AG04450 (cell line): ENCODE measurements at regions of chr12 and their contacts with region 1.

Region 1: DNA sequence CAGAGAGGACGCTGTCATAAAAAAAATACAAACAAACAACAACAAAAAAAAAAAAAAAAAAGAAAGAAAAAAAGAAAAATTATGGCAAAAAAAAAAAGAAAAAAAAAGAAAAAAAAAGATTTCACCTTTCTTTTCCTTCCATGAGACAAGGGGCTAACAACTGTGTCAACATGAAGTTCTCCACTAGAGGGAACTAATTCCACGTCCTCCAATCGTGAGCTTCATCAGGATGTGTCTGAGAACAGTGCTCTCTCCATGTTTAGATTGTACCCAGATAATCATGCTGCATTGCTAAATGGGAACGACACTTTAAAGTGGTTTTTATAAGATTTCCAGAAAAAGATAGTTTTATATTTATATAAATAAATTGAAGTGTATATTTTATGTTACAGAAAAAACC is 96.2 kb upstream of the PTPRB start:
- DNase-seq: no peak
- H3K4me3 ChIP-seq: no peak overlapping the region
- H3K27ac ChIP-seq: no peak overlapping the region
- H3K27me3 ChIP-seq: no peaks in the 10 kb centered on the region
- CTCF ChIP-seq: peak; percentile 79

Region 2: GRCh38 chr12:70590051-70590450 is 143.3 kb before region 1 on chr12:
- CTCF ChIA-PET with region 1: interaction called, 10 read pairs
- POLR2A ChIA-PET with region 1: no interaction called
- DNase-seq: peak; percentile 41
- H3K4me3 ChIP-seq: no peak overlapping the region
- H3K27ac ChIP-seq: no peak overlapping the region
- H3K27me3 ChIP-seq: no peaks in the 10 kb centered on the region
- CTCF ChIP-seq: peak; percentile 90

Region 3: GRCh38 chr12:70671698-70672097 is 61.7 kb before region 1 on chr12:
- CTCF ChIA-PET with region 1: interaction called, 12 read pairs
- POLR2A ChIA-PET with region 1: no interaction called
- DNase-seq: no peak
- H3K4me3 ChIP-seq: no peak overlapping the region
- H3K27ac ChIP-seq: no peak overlapping the region
- H3K27me3 ChIP-seq: no peaks in the 10 kb centered on the region
- CTCF ChIP-seq: no peak

Region 4: GRCh38 chr12:70744133-70744532 is 10.7 kb after region 1 on chr12:
- CTCF ChIA-PET with region 1: interaction called, 11 read pairs
- POLR2A ChIA-PET with region 1: no interaction called
- DNase-seq: no peak
- H3K4me3 ChIP-seq: no peak overlapping the region
- H3K27ac ChIP-seq: no peak overlapping the region
- H3K27me3 ChIP-seq: peaks cover 3% of the 10 kb centered on the region
- CTCF ChIP-seq: no peak